ENCODE measurements at regions of chr3 and their contacts with region 1.

Region 1: GRCh38 chr3:150335631-150336030 is 72.5 kb upstream of the TSC22D2 start:
- DNase-seq: peak; percentile 70

Region 2: GRCh38 chr3:150401285-150401684 is 65.7 kb after region 1 on chr3:
- in situ Hi-C with region 1: loop called (anchors 5 kb)
- DNase-seq: no peak